ENCODE measurements at regions of chr9 and their contacts with region 1.

Region 1: GRCh38 chr9:126704873-126705766 is 91.4 kb downstream of the LMX1B start:
- DNase-seq: peak; percentile 94
- ATAC-seq: peak; percentile 43
- H3K4me3 Mint-ChIP-seq: peak overlapping the region; percentile 49
- H3K27ac Mint-ChIP-seq: no peak overlapping the region
- H3K4me1 Mint-ChIP-seq: peaks cover 17% of the 10 kb centered on the region
- H3K27me3 Mint-ChIP-seq: peaks cover 62% of the 10 kb centered on the region
- CTCF ChIP-seq: peak; percentile 78

Region 2: GRCh38 chr9:126506361-126506941 is 198.7 kb before region 1 on chr9:
- CTCF ChIA-PET with region 1: interaction called, 34 read pairs
- POLR2A ChIA-PET with region 1: no interaction called
- DNase-seq: no peak
- ATAC-seq: no peak
- H3K4me3 Mint-ChIP-seq: no peak overlapping the region
- H3K27ac Mint-ChIP-seq: no peak overlapping the region
- H3K4me1 Mint-ChIP-seq: no peaks in the 10 kb centered on the region
- H3K27me3 Mint-ChIP-seq: no peaks in the 10 kb centered on the region
- CTCF ChIP-seq: no peak

Region 3: GRCh38 chr9:126611592-126612325 is 93.4 kb before region 1 on chr9:
- CTCF ChIA-PET with region 1: interaction called, 19 read pairs
- POLR2A ChIA-PET with region 1: no interaction called
- DNase-seq: peak; percentile 94
- ATAC-seq: peak; percentile 64
- H3K4me3 Mint-ChIP-seq: peak overlapping the region; percentile 58
- H3K27ac Mint-ChIP-seq: no peak overlapping the region
- H3K4me1 Mint-ChIP-seq: peaks cover 32% of the 10 kb centered on the region
- H3K27me3 Mint-ChIP-seq: peaks cover 94% of the 10 kb centered on the region
- CTCF ChIP-seq: peak; percentile 81

Region 4: DNA sequence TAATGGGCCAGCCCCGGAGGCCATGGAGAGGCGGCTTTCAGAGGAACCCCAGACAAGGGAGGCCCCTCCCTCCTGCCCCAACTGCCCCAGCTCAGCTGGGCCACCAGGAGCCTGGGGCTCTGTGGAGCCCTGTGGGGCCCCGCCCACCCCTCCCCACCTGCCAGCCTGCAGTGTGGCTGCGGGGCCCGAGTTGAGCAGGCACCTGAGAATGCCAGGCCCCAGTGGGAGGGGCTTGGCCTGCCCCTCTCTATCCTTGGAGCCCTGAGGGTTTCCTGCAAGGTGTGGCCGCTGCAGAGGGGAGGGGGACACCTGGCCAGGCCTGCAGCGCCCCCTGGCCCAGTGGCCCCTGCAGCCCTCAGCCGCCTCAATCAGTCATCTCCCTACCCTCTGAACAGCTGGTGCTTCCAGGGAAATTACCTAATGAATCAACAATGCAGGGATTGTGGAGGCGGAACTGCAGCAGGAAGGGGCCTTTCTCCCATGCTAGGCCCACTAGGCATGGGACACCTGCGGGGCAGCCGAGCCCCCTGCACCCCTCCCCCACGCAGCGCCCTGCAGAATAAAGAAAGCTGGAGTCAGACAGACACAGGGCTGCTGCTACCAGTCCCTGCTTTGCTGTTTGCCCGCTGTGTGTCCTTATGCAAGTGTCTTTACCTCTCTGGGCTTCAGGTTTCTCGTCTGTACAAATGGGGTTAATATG is 43.4 kb before region 1 on chr9:
- CTCF ChIA-PET with region 1: interaction called, 27 read pairs
- POLR2A ChIA-PET with region 1: no interaction called
- DNase-seq: peak; percentile 80
- ATAC-seq: peak; percentile 82
- H3K4me3 Mint-ChIP-seq: no peak overlapping the region
- H3K27ac Mint-ChIP-seq: peak overlapping the region; percentile 7; the same call in 1 of the 2 replicates
- H3K4me1 Mint-ChIP-seq: peaks cover 43% of the 10 kb centered on the region
- H3K27me3 Mint-ChIP-seq: peaks cover 18% of the 10 kb centered on the region
- CTCF ChIP-seq: no peak

Region 5: DNA sequence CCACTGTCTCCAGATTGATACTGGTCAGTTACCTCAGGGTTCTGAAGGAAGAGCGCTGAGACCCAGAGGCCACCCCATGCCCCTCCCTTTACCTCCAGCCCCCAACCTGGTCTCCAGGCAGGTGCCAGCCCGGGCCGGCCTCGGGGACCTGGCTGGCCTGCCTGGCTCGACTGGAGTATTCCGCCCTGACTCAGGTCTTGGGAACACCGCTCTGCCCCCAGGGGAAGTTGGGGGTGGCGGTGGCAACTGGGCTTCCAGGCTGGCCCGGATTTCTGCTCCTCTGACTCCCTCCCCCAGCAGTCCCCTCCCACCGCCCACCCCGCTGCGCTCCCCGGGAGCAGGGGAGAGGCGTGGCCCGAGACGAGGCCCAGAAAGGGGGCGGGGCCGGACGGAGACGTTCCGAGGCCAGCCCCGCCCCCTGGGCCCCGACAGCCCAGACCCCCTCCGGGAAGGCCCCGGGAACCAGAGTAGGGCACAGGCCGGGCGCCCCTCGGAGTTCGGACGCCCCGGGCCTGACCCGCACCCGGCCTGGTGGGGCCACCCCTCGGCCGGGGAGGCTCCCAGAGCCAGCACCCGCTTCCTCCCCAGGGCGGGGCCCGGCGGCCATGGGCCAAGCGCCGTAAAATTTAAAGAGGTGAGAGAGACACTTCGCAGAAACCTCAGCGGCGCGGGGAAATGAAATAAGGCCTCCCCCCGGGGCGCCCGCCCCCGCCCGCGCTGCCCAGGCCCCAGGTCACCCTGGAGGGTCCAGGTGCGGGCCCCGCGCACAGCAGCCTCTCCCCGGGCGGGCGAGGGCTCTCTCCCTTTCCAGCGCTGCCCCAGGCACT is 17.3 kb after region 1 on chr9:
- CTCF ChIA-PET with region 1: interaction called, 60 read pairs
- POLR2A ChIA-PET with region 1: no interaction called
- DNase-seq: peak; percentile 88
- ATAC-seq: peak; percentile 64
- H3K4me3 Mint-ChIP-seq: peak overlapping the region; percentile 76
- H3K27ac Mint-ChIP-seq: peak overlapping the region; percentile 60; the same call in 1 of the 2 replicates
- H3K4me1 Mint-ChIP-seq: peaks cover 37% of the 10 kb centered on the region
- H3K27me3 Mint-ChIP-seq: peaks cover 47% of the 10 kb centered on the region
- CTCF ChIP-seq: no peak

Region 6: DNA sequence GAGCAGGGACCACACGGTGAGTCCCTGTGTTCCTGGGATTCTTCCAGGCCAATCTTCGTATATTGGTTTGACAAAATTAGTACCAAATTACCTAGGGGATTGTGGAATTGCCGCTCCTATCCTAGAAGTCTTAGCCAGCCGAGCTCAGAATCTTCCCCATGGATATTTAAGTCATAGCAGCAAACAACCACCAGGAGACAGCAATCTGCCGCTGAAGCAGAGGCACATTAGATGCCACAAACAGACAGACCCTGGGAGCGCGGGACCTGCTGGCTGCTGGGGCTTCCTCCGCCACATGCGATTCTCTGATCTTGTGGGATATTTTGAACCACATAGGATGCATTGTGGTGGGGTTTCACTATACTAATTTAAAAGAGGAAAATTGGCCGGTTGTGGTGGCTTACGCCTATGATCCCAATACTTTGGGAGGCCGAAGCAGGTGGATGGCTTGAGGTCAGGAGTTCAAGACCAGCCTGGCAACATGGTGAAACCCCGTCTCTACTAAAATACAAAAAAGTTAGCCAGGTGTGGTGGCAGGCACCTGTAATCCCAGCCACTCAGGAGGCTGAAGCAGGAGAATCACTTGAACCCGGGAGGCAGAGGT is 68.0 kb after region 1 on chr9:
- CTCF ChIA-PET with region 1: interaction called, 734 read pairs
- POLR2A ChIA-PET with region 1: interaction called, 4 read pairs
- DNase-seq: peak; percentile 66
- ATAC-seq: peak; percentile 78
- H3K4me3 Mint-ChIP-seq: no peak overlapping the region
- H3K27ac Mint-ChIP-seq: no peak overlapping the region
- H3K4me1 Mint-ChIP-seq: no peaks in the 10 kb centered on the region
- H3K27me3 Mint-ChIP-seq: peaks cover 13% of the 10 kb centered on the region
- CTCF ChIP-seq: peak; percentile 50

Measured in WTC11 (cell line).